Activated T-helper 2 cell treated with anti-CD3 and anti-CD28 coated beads, Interferon-gamma antibody, Interleukin-2, Interleukin-4, amounts not matched to agents 10 μg/mL and 5 μg/mL and 100 μg/mL, durations not matched to agents 14 hours and 24 hours and 36 hours (primary cell): ENCODE measurements at regions of chr16 and their contacts with region 1.

Region 1: DNA sequence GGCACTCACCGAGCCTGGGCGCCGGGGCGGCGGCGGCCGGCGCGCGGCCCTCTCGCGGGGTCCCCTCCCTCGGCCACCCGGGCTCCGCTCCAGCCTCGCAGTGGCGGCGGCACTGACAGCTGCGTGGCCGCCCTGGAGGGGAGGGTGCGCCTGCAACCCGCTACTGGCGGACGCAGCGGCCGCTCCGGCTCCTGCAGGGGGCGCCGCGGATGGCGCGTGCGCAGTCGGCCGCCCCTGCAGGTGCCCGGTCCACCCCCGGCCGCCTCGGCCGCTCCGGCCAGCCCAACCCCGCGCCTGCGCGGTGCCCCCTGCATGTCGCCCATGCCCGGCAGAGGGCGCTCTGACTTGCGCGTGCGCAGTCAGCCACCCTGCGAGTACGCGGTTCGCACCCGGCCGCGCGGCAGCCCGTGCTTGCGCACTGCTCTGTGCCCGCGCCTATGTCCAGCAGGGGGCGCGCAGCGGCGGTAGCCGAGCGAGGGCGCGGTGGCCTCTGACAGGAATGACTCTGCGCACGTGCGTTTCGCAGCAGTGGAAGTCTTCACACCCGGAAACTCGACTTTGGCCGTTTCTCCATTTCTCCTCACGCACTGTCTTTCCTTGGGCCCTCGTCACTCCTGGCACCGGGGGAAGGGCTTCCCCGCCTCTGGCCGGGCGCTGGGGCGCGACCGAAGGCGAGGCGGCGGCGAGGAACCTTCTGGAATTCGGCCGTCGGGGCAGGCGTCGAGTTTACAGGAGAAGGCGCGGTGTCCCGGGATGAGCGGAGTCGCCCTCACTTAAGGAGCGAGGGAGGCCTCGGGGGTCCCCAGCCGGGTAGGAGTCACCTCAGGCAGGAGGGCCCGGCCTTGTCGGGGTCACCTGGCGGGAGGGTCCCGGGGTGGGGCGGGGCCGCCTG is at the start of gene ABCA3:
- DNase-seq: peak; percentile 96
- H3K4me3 Mint-ChIP-seq: peak within 1 kb of the TSS; percentile 84
- H3K27ac Mint-ChIP-seq: peak within 1 kb of the TSS; percentile 33
- H3K4me1 Mint-ChIP-seq: peaks cover 23% of the 10 kb centered on the region
- H3K27me3 Mint-ChIP-seq: peaks cover 28% of the 10 kb centered on the region
- total RNA-seq, gene ABCA3: 11.1 and 12.5 TPM in 2 replicates

Region 2: GRCh38 chr16:2429034-2429770 is 88.4 kb after region 1 on chr16 and contains the start of gene CCNF:
- intact Hi-C with region 1: loop called (anchors 2 kb)
- DNase-seq: peak; percentile 94
- H3K4me3 Mint-ChIP-seq: peak within 1 kb of the TSS; percentile 96
- H3K27ac Mint-ChIP-seq: peak within 1 kb of the TSS; percentile 62
- H3K4me1 Mint-ChIP-seq: peaks cover 27% of the 10 kb centered on the region
- H3K27me3 Mint-ChIP-seq: no peaks in the 10 kb centered on the region
- total RNA-seq, gene CCNF: 48.4 and 48.9 TPM in 2 replicates

Region 3: GRCh38 chr16:2447920-2448583 is 107.2 kb after region 1 on chr16:
- intact Hi-C with region 1: no loop called
- DNase-seq: no peak
- H3K4me3 Mint-ChIP-seq: no peak overlapping the region
- H3K27ac Mint-ChIP-seq: no peak overlapping the region
- H3K4me1 Mint-ChIP-seq: no peaks in the 10 kb centered on the region
- H3K27me3 Mint-ChIP-seq: no peaks in the 10 kb centered on the region